ENCODE measurements at regions of chr1 and their contacts with region 1.

Region 1: GRCh38 chr1:46223472-46223943 is 20.4 kb downstream of the LURAP1 start:
- DNase-seq: peak; percentile 49
- H3K4me3 ChIP-seq: no peak overlapping the region
- H3K27me3 ChIP-seq: no peaks in the 10 kb centered on the region
- CTCF ChIP-seq: peak; percentile 94

Region 2: DNA sequence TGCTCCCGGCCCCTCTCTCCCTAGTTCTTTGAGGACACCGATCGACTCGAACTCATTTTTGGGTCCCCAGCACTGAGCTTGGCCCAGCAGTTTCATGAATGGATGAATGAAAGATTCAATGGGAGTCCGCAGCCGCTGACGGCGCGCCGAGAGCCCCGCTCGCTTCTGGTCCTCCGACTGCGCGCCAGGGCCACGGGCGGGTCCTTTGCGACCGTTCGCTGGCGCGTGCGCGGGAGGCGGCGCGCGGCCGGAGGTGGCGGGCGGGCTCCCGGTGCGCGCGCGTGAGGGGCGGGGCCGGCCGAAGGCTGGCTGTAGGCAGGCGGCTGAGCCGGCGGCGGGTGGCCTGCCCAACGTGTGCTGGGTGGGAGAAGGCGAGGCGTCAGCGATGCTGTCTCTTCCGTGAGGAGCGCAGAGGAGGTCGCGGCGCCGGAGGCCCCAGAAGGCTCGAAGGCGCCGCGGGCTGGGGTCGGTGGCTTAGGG is 420.2 kb before region 1 on chr1 and contains the start of gene MAST2:
- CTCF ChIA-PET with region 1: no interaction called
- POLR2A ChIA-PET with region 1: interaction called, 18 read pairs
- DNase-seq: peak; percentile 44
- H3K4me3 ChIP-seq: peak within 1 kb of the TSS; percentile 76
- H3K27me3 ChIP-seq: no peaks in the 10 kb centered on the region
- CTCF ChIP-seq: no peak
- polyA plus RNA-seq, gene MAST2: 31.0 and 47.2 TPM in 2 replicates

Region 3: GRCh38 chr1:46036894-46037839 is 186.3 kb before region 1 on chr1:
- CTCF ChIA-PET with region 1: interaction called, 81 read pairs
- POLR2A ChIA-PET with region 1: no interaction called
- DNase-seq: peak; percentile 18
- H3K4me3 ChIP-seq: no peak overlapping the region
- H3K27me3 ChIP-seq: no peaks in the 10 kb centered on the region
- CTCF ChIP-seq: peak; percentile 97

Region 4: GRCh38 chr1:46179138-46180081 is 44.1 kb before region 1 on chr1:
- CTCF ChIA-PET with region 1: interaction called, 42 read pairs
- POLR2A ChIA-PET with region 1: interaction called, 13 read pairs
- DNase-seq: no peak
- H3K4me3 ChIP-seq: no peak overlapping the region
- H3K27me3 ChIP-seq: no peaks in the 10 kb centered on the region
- CTCF ChIP-seq: peak; percentile 91

Region 5: GRCh38 chr1:46203738-46204405 is 19.6 kb before region 1 on chr1:
- CTCF ChIA-PET with region 1: interaction called, 55 read pairs
- POLR2A ChIA-PET with region 1: no interaction called
- DNase-seq: no peak
- H3K4me3 ChIP-seq: peak overlapping the region; percentile 68
- H3K27me3 ChIP-seq: no peaks in the 10 kb centered on the region
- CTCF ChIP-seq: no peak

Region 6: GRCh38 chr1:46236882-46237281 is 13.4 kb after region 1 on chr1:
- CTCF ChIA-PET with region 1: interaction called, 31 read pairs
- POLR2A ChIA-PET with region 1: no interaction called
- DNase-seq: no peak
- H3K4me3 ChIP-seq: no peak overlapping the region
- H3K27me3 ChIP-seq: no peaks in the 10 kb centered on the region
- CTCF ChIP-seq: no peak

Region 7: DNA sequence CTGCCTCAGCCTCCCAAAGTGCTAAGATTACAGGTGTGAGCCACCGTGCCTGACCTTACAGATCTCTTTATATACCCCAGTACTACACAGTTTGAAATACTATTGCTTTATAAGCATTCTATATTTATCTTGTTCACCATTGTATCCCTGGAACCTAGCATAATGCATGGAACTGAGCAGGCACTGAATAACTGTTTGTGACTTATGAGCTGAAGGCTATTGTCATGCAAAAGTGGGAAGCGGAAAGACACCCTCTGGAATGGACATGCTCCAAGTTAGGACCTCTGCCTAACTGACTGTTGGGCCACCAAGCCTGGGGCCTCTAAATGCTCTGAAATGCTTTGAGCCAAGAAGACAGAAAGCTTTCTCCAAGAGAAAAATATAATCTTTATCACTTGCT is 71.8 kb after region 1 on chr1:
- CTCF ChIA-PET with region 1: no interaction called
- POLR2A ChIA-PET with region 1: no interaction called
- DNase-seq: no peak
- H3K4me3 ChIP-seq: no peak overlapping the region
- H3K27me3 ChIP-seq: no peaks in the 10 kb centered on the region
- CTCF ChIP-seq: no peak